A549 (cell line): ENCODE measurements at regions of chr15 and their contacts with region 1.

Region 1: GRCh38 chr15:55649054-55649423 is 60.9 kb upstream of the PYGO1 start:
- DNase-seq: no peak
- ATAC-seq: peak in 1 of 2 experiments; percentile 69; a peak in 3 of 6 replicates
- H3K4me3 ChIP-seq: no peak overlapping the region
- H3K27ac ChIP-seq: no peak overlapping the region
- H3K4me1 ChIP-seq: no peaks in the 10 kb centered on the region
- CTCF ChIP-seq: no peak
- EP300 ChIP-seq: no peak
- POLR2A ChIP-seq: no peak
- RAD21 ChIP-seq: no peak

Region 2: GRCh38 chr15:55637086-55637485 is 12.0 kb before region 1 on chr15:
- CTCF ChIA-PET with region 1: interaction called, 15 read pairs
- POLR2A ChIA-PET with region 1: no interaction called
- DNase-seq: no peak
- ATAC-seq: no peak
- H3K4me3 ChIP-seq: no peak overlapping the region
- H3K27ac ChIP-seq: no peak overlapping the region
- H3K4me1 ChIP-seq: peaks cover 4% of the 10 kb centered on the region; the same call in 1 of the 3 replicates
- CTCF ChIP-seq: no peak
- EP300 ChIP-seq: no peak
- POLR2A ChIP-seq: no peak
- RAD21 ChIP-seq: no peak

Region 3: GRCh38 chr15:55665605-55666227 is 16.7 kb after region 1 on chr15:
- CTCF ChIA-PET with region 1: interaction called, 36 read pairs
- POLR2A ChIA-PET with region 1: no interaction called
- DNase-seq: no peak
- ATAC-seq: no peak
- H3K4me3 ChIP-seq: no peak overlapping the region
- H3K27ac ChIP-seq: no peak overlapping the region
- H3K4me1 ChIP-seq: peaks cover 9% of the 10 kb centered on the region
- CTCF ChIP-seq: no peak
- EP300 ChIP-seq: no peak
- POLR2A ChIP-seq: no peak
- RAD21 ChIP-seq: no peak

Region 4: DNA sequence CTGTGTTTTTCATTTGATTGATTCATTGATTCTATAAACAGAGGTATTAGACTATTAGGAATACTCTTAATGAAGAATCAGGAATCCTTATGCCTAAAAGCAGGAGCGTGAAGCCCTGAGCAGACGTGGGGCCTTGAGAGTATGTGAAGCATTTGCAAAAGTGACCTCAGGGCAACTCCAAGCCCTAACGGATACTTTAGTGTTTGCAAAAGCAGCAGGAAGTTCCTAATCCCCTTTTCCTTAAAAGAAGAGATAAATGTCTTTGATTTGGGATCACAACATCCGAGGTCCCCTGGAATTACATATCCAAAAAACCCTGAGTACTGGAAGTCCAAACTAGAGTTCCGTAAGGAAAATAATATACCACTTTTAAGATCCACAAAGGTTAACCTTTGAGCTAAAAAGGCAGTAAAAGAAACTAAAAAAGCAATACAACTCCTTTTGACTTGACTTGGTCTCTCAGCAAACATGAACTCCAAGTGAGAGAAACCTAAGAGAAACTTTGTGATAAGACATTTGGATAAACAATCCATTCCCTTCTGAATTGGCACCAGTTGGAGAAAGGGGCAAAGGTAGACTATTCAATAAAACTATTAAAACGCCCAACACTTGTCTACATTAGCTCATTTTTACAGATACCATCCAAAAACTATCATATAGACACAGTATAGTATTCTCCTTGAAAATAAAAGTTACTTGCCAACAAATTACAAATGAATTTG is 66.5 kb after region 1 on chr15:
- CTCF ChIA-PET with region 1: no interaction called
- POLR2A ChIA-PET with region 1: no interaction called
- DNase-seq: no peak
- ATAC-seq: no peak
- H3K4me3 ChIP-seq: no peak overlapping the region
- H3K27ac ChIP-seq: no peak overlapping the region
- H3K4me1 ChIP-seq: no peaks in the 10 kb centered on the region
- CTCF ChIP-seq: no peak
- EP300 ChIP-seq: no peak
- POLR2A ChIP-seq: no peak
- RAD21 ChIP-seq: no peak

Region 5: GRCh38 chr15:55846116-55846707 is 197.2 kb after region 1 on chr15:
- CTCF ChIA-PET with region 1: interaction called, 50 read pairs
- POLR2A ChIA-PET with region 1: interaction called, 3 read pairs
- DNase-seq: peak; percentile 71 to 85
- ATAC-seq: peak; percentile 74 to 87; a peak in 5 of 6 replicates
- H3K4me3 ChIP-seq: no peak overlapping the region
- H3K27ac ChIP-seq: no peak overlapping the region
- H3K4me1 ChIP-seq: no peaks in the 10 kb centered on the region
- CTCF ChIP-seq: peak; percentile 87
- EP300 ChIP-seq: no peak
- POLR2A ChIP-seq: no peak
- RAD21 ChIP-seq: peak; percentile 79 to 81

Region 6: GRCh38 chr15:55917881-55918296 is 268.9 kb after region 1 on chr15:
- CTCF ChIA-PET with region 1: interaction called, 64 read pairs
- POLR2A ChIA-PET with region 1: interaction called, 3 read pairs
- DNase-seq: peak; percentile 49 to 91
- ATAC-seq: peak; percentile 75 to 94
- H3K4me3 ChIP-seq: no peak overlapping the region
- H3K27ac ChIP-seq: peak overlapping the region; percentile 30 to 74; a peak in 4 of 6 replicates
- H3K4me1 ChIP-seq: peaks cover 17% of the 10 kb centered on the region; the same call in 2 of the 3 replicates
- CTCF ChIP-seq: peak; percentile 96
- EP300 ChIP-seq: no peak
- POLR2A ChIP-seq: no peak
- RAD21 ChIP-seq: peak; percentile 87 to 92